Naive thymus-derived CD4-positive, alpha-beta T cell (primary cell): ENCODE measurements at regions of chrX and their contacts with region 1.

Region 1: DNA sequence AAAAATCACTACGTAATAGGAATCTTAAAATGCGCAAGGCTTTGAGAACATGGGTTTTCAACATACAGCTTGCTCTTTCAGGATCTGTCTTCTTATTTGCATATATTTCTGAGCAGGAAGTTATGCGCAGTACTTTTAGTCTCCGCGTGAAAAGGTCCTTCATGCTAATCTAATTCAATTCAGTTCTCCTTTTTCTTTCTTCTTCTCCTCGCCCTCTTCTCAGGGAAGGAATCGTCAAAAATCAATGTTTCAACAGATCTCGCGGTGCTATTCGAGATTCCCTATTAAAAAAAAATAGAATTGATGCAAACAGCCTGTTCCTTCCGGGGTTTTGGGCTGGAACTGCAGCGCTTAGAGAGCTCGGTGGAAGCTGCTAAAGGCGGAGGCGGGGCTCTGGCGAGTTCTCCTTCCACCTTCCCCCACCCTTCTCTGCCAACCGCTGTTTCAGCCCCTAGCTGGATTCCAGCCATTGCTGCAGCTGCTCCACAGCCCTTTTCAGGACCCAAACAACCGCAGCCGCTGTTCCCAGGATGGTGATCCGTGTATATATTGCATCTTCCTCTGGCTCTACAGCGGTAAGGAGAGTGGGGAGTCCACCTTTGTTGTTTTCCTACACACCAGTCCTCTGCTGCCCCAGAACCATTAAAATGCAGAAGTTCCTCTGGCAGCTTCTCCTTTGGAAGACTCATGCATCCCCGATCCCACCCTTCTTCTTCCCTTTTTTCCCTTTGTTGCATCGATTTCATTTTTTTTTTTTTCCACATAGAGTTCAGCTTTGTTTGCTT is at the starts of genes HMGN5 and SH3BGRL:
- DNase-seq: peak; percentile 34 to 80 (median 70)
- ATAC-seq: peak; percentile 95
- H3K4me3 ChIP-seq: peak within 1 kb of the TSS; percentile 97
- H3K4me3 Mint-ChIP-seq: peak within 1 kb of the TSS; percentile 89 to 99 (median 96)
- H3K27ac ChIP-seq: peak within 1 kb of the TSS; percentile 87
- H3K27ac Mint-ChIP-seq: peak within 1 kb of the TSS; percentile 92 to 99 (median 96)
- H3K4me1 ChIP-seq: peaks cover 0 to 13% of the 10 kb centered on the region in 2 donors
- H3K4me1 Mint-ChIP-seq: peaks cover 25 to 66% (median 55%) of the 10 kb centered on the region in 7 donors
- H3K27me3 ChIP-seq: no peaks in the 10 kb centered on the region
- H3K27me3 Mint-ChIP-seq: no peaks in the 10 kb centered on the region
- total RNA-seq, gene HMGN5: 0.46 to 2.6 (median 1.0) TPM
- total RNA-seq, gene SH3BGRL: 66.6 to 140 (median 75.3) TPM

Region 2: DNA sequence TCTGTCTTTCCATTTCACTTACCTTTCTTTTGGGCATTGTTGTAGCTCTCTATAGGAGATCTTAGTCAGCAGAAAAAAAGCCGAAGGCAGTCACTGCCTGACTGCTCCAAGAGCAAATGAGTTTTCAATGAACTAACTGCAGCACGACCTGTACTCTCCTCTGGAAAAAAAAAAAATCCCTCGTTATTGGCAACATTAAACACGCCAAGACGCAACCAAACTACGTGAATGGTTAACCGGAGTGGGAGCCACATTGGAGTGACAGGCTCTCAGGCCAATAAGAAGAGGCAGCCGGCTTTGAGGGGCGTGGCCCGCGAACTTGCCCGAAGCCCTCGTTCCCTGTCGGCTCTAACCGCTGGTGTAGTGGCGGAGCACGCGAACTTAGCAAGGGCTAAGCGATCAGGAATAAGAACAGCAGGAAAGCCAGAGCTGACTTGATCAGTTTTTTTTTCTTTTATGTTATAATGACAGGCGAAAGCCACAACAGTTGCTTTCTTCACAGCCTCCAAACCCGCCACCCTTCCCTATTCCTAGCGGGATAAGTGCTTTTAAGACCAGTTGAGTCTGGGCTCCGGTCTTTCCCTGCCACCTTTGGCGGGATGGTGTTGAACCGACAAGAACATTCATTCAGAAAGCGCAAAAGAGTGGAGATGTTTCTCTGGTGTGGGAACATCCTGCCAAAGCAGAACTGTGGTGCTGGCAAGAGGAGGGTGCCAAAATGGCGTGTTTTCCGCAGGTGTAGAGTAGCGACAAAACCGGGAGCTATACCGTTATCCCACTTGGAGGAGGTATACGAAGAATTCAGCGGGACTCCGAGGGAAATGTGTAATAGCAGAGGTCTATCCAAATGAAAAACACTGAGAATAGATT is 80.1 kb before region 1 on chrX:
- CTCF ChIA-PET with region 1: interaction called, 3 read pairs
- POLR2A ChIA-PET with region 1: no interaction called
- intact Hi-C with region 1: loop called (anchors 1 kb)
- DNase-seq: peak; percentile 71 to 87 (median 84)
- ATAC-seq: peak; percentile 97
- H3K4me3 ChIP-seq: peak overlapping the region; percentile 77
- H3K4me3 Mint-ChIP-seq: peak overlapping the region; percentile 85 to 98 (median 93)
- H3K27ac ChIP-seq: peak overlapping the region; percentile 52
- H3K27ac Mint-ChIP-seq: peak overlapping the region; percentile 63 to 90 (median 77)
- H3K4me1 ChIP-seq: no peaks in the 10 kb centered on the region
- H3K4me1 Mint-ChIP-seq: peaks cover 0 to 17% (median 6%) of the 10 kb centered on the region in 7 donors
- H3K27me3 ChIP-seq: no peaks in the 10 kb centered on the region
- H3K27me3 Mint-ChIP-seq: peaks cover 0 to 21% (median 0%) of the 10 kb centered on the region in 5 donors